Activated T-helper 1 cell treated with anti-CD3 and anti-CD28 coated beads, Interleukin-12 subunit alpha, Interleukin-12 subunit beta, Interleukin-2, Interleukin-4 antibody, amounts not matched to agents 30 ng/mL and 10 ng/mL and 1 ng/mL, durations not matched to agents 14 hours and 24 hours and 36 hours (primary cell): ENCODE measurements at regions of chr9 and their contacts with region 1.

Region 1: DNA sequence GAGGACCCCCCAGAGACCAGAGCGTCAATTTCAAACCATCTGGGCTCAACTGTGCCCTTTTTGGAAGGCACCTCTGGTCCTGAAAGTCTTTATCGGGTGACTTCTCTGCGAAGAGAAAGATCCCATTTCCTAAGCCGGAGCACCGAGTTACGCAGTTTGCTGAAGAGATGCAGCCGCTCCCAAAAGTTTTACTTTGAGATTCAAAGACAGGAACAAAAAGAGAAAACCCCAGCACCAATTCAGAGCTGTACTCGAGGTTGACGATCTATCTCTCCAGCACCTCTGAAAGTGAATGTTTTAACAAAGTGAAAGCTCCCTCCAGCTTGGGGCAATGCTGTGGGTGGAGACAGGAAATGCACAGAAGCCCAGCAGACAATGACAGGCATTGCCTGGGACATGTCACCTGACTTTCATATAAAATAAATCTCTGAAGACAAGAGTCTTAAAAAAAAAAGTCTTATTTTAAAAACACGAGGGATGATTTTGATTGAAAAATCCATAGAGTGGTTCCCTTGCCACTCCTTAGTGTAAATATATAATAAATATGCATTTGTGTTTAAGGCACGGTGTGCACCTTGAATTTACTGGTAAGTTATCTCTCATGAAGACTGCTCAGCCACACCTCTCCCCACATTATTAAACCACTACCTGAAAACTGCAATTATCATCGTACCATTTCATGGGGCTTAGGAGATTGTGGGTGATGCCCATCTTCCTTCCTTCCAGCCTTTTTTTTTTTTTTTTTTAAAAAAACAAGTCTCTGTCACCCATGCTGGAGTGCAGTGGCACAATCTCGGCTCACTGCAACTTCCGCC is 79.9 kb downstream of the FNBP1 start:
- DNase-seq: peak; percentile 70
- H3K4me3 Mint-ChIP-seq: peak overlapping the region; percentile 76
- H3K27ac Mint-ChIP-seq: peak overlapping the region; percentile 88
- H3K4me1 Mint-ChIP-seq: peaks cover 60% of the 10 kb centered on the region
- H3K27me3 Mint-ChIP-seq: no peaks in the 10 kb centered on the region

Region 2: DNA sequence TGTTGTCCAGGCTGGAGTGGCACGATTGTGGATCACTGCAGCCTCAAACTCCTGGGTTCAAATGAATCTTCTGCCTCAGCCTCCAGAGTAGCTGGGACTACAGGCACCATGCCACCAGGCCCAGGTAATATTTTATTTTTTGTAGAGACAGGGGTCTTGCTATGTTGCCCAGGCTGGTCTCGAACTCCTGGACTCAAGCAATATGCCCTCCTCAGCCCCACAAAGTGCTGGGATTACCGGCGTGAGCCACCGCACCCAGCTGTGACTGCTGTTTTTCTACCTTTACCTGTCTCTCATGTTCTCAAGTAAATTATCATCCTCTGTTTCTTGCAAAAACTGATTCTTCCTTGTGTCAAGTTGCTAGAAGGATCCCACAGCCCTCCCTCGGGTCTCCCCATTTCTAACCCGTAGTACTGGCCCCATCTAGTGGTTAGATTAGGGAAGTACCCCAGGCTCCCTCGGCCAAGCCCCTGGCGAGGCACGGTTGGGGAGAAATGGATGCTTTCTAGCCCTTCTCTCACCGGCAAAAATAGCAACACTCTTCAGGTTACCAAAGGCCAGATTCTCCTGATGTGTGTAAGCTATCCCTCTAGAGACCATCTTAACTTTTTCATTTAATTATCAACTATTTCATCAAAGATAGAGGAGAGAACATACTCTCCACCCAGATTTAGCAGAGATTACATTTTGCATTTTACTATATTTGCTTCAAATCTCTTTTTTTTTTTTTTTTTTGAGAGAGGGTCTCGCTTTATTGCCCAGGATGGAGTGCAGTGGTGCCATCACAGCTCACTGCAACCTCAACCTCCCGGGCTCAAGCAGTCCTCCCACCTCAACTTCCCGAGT is 179.4 kb before region 1 on chr9:
- intact Hi-C with region 1: no loop called
- DNase-seq: peak; percentile 68
- H3K4me3 Mint-ChIP-seq: no peak overlapping the region
- H3K27ac Mint-ChIP-seq: no peak overlapping the region
- H3K4me1 Mint-ChIP-seq: peaks cover 5% of the 10 kb centered on the region
- H3K27me3 Mint-ChIP-seq: peaks cover 18% of the 10 kb centered on the region

Region 3: DNA sequence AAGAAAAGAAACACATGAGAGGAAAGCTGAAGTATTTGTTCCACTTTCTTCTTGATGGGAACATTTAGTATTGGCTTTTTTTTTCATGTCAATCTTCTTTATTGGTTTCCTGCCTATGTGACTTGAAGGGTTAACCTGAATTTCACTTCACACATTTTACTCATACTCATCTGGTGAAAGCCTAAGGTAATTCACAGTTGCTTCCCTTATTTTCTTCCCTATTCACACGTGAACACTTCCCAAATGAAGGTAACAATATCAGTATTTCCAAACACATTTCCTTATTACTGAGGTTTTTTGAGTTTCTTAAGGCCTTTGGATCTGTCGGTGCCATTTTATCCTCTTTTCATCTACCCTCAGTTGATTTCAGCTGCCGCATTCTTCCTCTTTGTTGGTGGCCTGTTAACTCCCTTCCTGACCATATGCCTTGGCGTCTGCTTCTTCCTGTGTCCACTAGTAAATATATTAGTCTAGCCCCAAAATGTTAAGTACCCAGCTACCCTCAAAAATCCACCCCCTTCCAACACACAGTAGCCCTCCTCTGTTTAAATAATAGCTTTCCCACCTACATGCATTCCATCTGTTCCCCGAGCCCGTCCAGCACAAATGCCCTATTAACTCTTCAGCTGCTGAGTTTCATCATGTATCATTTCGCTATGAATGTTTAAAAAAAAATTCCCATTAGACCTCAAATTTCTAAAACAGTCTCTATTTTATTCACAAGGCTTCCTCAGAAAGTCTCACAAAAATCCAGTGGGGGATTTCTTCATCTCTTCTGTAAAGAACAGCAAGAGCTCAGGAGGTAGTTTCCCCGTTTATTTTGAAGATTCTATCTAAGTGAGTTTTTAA is 30.6 kb before region 1 on chr9:
- intact Hi-C with region 1: loop called (anchors 2 kb)
- DNase-seq: no peak
- H3K4me3 Mint-ChIP-seq: peak overlapping the region; percentile 66
- H3K27ac Mint-ChIP-seq: peak overlapping the region; percentile 92
- H3K4me1 Mint-ChIP-seq: peaks cover 57% of the 10 kb centered on the region
- H3K27me3 Mint-ChIP-seq: no peaks in the 10 kb centered on the region

Region 4: DNA sequence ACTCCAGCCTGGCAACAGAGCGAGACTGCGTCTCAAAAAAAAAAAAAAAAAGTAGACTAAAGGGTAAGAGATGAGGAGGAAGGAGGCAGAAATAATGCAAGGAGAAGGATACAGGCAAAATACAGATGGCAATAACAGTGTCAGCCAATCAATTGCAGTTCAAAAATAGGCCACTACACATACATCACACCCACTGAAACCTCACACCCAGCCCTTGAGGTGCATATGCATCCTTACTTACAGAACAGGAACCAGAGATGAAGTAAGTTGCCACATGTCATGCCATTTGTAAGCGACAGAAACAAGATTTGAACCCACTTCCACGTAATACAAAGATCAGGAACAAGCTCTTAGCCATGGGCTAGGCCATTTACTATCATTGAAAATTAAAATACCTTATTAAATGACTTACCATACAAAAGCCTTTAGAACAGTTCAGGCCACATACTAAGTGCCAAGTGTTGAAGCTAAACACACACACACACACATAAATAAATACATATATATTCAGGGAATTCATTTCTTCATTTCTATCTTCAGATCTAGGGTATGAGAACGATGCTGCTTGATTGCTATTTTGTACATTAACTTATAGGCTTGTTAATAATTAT is 18.5 kb before region 1 on chr9:
- intact Hi-C with region 1: loop called (anchors 2 kb)
- DNase-seq: peak; percentile 59
- H3K4me3 Mint-ChIP-seq: peak overlapping the region; percentile 28
- H3K27ac Mint-ChIP-seq: peak overlapping the region; percentile 88
- H3K4me1 Mint-ChIP-seq: peaks cover 44% of the 10 kb centered on the region
- H3K27me3 Mint-ChIP-seq: no peaks in the 10 kb centered on the region

Region 5: GRCh38 chr9:129988607-129989361 is 25.7 kb after region 1 on chr9:
- intact Hi-C with region 1: loop called (anchors 1 kb)
- DNase-seq: no peak
- H3K4me3 Mint-ChIP-seq: peak overlapping the region; percentile 8
- H3K27ac Mint-ChIP-seq: peak overlapping the region; percentile 88
- H3K4me1 Mint-ChIP-seq: peaks cover 55% of the 10 kb centered on the region
- H3K27me3 Mint-ChIP-seq: no peaks in the 10 kb centered on the region

Region 6: GRCh38 chr9:130029223-130029973 is 66.3 kb after region 1 on chr9:
- intact Hi-C with region 1: loop called (anchors 1 kb)
- DNase-seq: no peak
- H3K4me3 Mint-ChIP-seq: peak overlapping the region; percentile 28
- H3K27ac Mint-ChIP-seq: peak overlapping the region; percentile 92
- H3K4me1 Mint-ChIP-seq: peaks cover 87% of the 10 kb centered on the region
- H3K27me3 Mint-ChIP-seq: no peaks in the 10 kb centered on the region

Region 7: DNA sequence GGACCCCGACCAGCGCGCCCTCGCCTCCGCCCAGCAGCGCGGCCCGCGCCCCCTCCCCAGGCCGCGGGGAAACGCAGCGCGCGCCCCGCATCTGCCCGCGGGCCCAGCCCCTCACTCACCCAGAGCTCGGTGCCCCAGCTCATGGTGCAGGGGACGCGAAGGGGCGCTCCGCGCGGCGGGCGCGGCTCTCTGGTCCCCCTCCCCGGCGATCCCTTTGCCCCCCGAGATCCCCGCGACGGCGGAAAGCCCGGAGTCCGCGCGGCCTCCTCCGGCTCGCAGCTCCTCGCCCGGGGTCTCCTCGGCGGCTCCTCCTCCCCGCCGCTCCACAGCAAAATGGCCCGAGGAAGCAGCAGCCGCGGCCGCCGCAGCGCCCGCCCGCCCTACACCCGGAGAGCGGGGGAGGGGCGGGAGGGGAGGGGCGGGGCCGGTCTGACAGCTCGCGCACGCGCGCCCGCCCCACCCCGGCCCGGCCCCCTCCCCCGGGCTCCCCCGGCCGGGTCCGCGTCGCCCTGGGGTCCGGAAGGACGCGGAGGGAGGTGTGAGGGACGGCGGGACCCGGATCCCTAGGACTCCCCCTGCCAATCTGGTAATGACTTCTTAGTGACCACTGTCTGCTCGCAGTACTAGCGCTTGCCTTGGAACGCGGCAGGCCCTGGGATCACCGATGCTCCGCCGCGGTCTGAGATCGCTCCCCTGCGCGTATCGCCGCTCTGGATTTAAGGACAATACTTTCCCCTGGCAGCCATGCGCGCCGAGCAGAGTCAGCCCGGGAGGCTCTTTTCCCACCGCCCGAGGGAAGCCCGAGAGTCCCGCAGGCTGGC is 79.9 kb after region 1 on chr9 and contains the start of gene FNBP1:
- intact Hi-C with region 1: loop called (anchors 2 kb)
- DNase-seq: peak; percentile 78
- H3K4me3 Mint-ChIP-seq: peak within 1 kb of the TSS; percentile 97
- H3K27ac Mint-ChIP-seq: peak within 1 kb of the TSS; percentile 99
- H3K4me1 Mint-ChIP-seq: peaks cover 55% of the 10 kb centered on the region
- H3K27me3 Mint-ChIP-seq: no peaks in the 10 kb centered on the region
- total RNA-seq, gene FNBP1: 195 and 202 TPM in 2 replicates

Region 8: DNA sequence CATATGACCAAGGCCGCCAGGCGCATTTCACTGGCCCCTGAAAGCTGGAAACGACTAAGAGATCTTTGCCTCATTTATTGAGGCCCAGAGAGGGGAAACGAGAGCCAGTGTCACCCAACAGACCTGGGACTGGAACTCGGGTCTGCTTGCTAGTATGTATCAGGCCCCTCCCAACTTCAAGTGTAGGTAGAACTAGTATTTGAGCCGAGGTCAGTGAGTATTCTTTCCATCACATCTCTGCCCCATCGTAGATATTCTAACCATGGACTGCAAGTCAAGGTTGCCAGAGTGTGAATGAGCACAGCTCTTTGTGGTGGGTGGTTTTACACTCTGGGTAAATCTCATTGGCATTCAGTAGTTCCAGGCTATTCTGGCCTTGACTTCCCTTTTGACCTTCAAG is 132.8 kb after region 1 on chr9:
- intact Hi-C with region 1: loop called (anchors 5 kb)
- DNase-seq: no peak
- H3K4me3 Mint-ChIP-seq: no peak overlapping the region
- H3K27ac Mint-ChIP-seq: peak overlapping the region; percentile 57
- H3K4me1 Mint-ChIP-seq: peaks cover 16% of the 10 kb centered on the region
- H3K27me3 Mint-ChIP-seq: no peaks in the 10 kb centered on the region